ENCODE measurements at regions of chr15 and their contacts with region 1.

Region 1: GRCh38 chr15:68154923-68155559 is 50.1 kb downstream of the CALML4 start:
- DNase-seq: peak in 1 of 2 donors; percentile 59
- ATAC-seq: peak in 7 of 8 donors; percentile 45 to 75 (median 57)
- H3K4me3 ChIP-seq: no peak overlapping the region
- H3K27ac ChIP-seq: no peak overlapping the region
- H3K4me1 ChIP-seq: peaks cover 0 to 18% (median 0%) of the 10 kb centered on the region in 9 donors
- H3K27me3 ChIP-seq: no peaks in the 10 kb centered on the region
- CTCF ChIP-seq: peak; percentile 59 to 89 (median 72)

Region 2: GRCh38 chr15:67880651-67881182 is 274.3 kb before region 1 on chr15:
- intact Hi-C with region 1: no loop called
- DNase-seq: peak in 1 of 2 donors; percentile 27
- ATAC-seq: peak in 1 of 8 donors; percentile 8
- H3K4me3 ChIP-seq: no peak overlapping the region
- H3K27ac ChIP-seq: no peak overlapping the region
- H3K4me1 ChIP-seq: peaks cover 0 to 57% (median 11%) of the 10 kb centered on the region in 9 donors
- H3K27me3 ChIP-seq: no peaks in the 10 kb centered on the region
- CTCF ChIP-seq: no peak

Region 3: GRCh38 chr15:67906382-67906781 is 248.7 kb before region 1 on chr15:
- intact Hi-C with region 1: loop called in 2 of 10 experiments (anchors 2 to 5 kb)
- DNase-seq: no peak
- ATAC-seq: peak in 6 of 8 donors; percentile 44 to 83 (median 68)
- H3K4me3 ChIP-seq: no peak overlapping the region
- H3K27ac ChIP-seq: no peak overlapping the region
- H3K4me1 ChIP-seq: peaks cover 0 to 10% (median 0%) of the 10 kb centered on the region in 9 donors
- H3K27me3 ChIP-seq: no peaks in the 10 kb centered on the region
- CTCF ChIP-seq: peak in 7 of 9 donors; percentile 18 to 50 (median 39)

Region 4: GRCh38 chr15:67917037-67917436 is 238.0 kb before region 1 on chr15:
- intact Hi-C with region 1: no loop called
- DNase-seq: peak; percentile 38 to 60
- ATAC-seq: peak; percentile 59 to 94 (median 85)
- H3K4me3 ChIP-seq: no peak overlapping the region
- H3K27ac ChIP-seq: peak overlapping the region; percentile 32 to 91 (median 73)
- H3K4me1 ChIP-seq: peaks cover 4 to 43% (median 32%) of the 10 kb centered on the region in 9 donors
- H3K27me3 ChIP-seq: no peaks in the 10 kb centered on the region
- CTCF ChIP-seq: peak in 3 of 9 donors; percentile 27 to 35 (median 31)

Region 5: DNA sequence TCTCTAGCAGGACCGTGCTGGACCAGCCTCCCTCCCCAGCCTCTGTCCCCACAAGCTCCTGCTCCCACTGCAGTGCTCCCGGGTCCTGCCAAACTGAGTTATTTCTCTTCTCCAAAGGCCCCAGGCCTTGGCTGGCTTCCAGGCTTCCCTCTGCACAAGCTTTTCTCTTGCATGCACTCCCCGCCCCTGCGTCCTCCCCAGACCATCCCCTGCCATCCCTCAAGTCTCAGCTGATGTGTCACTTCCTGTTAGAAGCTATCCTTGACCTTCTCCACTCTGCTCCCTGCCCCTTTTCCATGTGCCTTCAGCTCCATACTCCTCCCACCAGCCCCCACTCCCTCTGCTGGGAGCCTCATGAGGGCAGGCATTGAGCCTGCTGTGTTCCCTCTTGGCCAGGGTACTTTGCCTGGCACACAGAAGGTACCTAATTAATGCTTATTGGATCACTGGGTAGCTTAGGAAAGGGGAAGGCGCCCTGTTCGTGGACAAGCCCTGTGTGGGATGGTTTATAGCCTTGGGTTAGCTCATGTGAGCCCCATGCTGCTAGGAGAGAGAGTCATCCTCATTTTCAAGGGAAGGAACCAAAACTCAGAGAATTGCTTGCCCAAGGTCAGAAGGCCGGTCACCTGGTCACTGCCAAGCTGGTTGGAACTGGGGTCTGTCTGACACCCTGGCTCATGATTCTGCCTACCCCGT is 178.9 kb after region 1 on chr15:
- intact Hi-C with region 1: no loop called
- DNase-seq: peak in 1 of 2 donors; percentile 51
- ATAC-seq: peak in 2 of 8 donors; percentile 5 to 13
- H3K4me3 ChIP-seq: no peak overlapping the region
- H3K27ac ChIP-seq: peak overlapping the region in 4 of 10 donors; percentile 9 to 71 (median 26)
- H3K4me1 ChIP-seq: peaks cover 5 to 27% (median 20%) of the 10 kb centered on the region in 9 donors
- H3K27me3 ChIP-seq: no peaks in the 10 kb centered on the region
- CTCF ChIP-seq: no peak

Region 6: GRCh38 chr15:68517285-68517761 is 362.3 kb after region 1 on chr15:
- intact Hi-C with region 1: no loop called
- DNase-seq: peak in 1 of 2 donors; percentile 52
- ATAC-seq: peak; percentile 74 to 85 (median 81)
- H3K4me3 ChIP-seq: no peak overlapping the region
- H3K27ac ChIP-seq: peak overlapping the region in 9 of 10 donors; percentile 30 to 67 (median 52)
- H3K4me1 ChIP-seq: peaks cover 0 to 28% (median 17%) of the 10 kb centered on the region in 9 donors
- H3K27me3 ChIP-seq: no peaks in the 10 kb centered on the region
- CTCF ChIP-seq: peak in 7 of 9 donors; percentile 21 to 48 (median 43)